Gastrocnemius medialis (tissue), 4 donors: ENCODE measurements at regions of chr12 and their contacts with region 1.

Region 1: DNA sequence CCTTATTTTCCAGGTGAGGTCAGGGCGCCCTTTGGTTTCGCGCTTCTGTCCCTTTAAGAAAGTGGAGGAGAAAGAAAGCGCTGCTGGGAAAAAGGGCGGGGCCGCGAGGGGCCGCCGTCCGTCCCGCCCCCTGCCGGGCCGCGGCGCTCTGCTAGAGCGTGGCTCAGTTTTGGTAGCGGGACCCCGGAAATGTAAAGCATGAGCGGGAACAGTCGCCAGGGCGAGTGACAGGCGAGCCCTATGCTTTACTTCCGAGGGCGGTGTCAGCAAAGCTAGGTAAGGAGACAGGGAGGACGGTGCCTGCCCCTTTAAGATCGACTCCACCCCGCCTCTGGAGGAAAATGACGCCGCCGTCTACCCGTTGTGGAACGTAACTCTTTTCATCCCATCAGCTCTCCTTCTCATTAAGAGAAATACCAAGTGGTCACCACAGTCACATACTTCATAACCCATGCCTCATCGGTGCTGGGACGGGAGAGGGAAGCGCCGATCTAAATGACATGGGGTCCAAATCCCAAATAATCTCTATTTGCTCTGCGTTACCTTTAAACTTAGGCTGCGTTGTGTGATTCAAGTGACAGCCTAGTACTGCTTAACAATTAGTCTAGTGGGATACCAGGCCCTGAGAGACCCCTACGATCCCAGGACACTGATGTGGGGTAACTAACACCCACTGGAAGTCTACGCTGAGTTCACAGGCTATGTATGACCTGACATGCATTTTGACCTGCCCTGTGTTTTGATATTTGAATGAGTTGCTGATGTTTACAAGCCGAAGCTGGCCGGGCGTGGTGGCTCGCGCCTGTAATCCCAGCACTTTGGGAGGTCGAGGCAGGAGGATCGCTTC is at the start of gene ETFBKMT:
- DNase-seq: peak; percentile 81 to 84
- ATAC-seq: peak; percentile 96 to 98
- H3K4me3 ChIP-seq: peak within 1 kb of the TSS; percentile 75 to 96 (median 90)
- H3K27ac ChIP-seq: peak within 1 kb of the TSS; percentile 89 to 98 (median 95)
- H3K4me1 ChIP-seq: peaks cover 4 to 12% of the 10 kb centered on the region in 2 donors
- H3K27me3 ChIP-seq: no peaks in the 10 kb centered on the region
- CTCF ChIP-seq: peak; percentile 24 to 76 (median 64)
- POLR2A ChIP-seq: peak; percentile 28 to 63
- total RNA-seq, gene ETFBKMT: 2.6 to 13.5 (median 5.0) TPM

Region 2: DNA sequence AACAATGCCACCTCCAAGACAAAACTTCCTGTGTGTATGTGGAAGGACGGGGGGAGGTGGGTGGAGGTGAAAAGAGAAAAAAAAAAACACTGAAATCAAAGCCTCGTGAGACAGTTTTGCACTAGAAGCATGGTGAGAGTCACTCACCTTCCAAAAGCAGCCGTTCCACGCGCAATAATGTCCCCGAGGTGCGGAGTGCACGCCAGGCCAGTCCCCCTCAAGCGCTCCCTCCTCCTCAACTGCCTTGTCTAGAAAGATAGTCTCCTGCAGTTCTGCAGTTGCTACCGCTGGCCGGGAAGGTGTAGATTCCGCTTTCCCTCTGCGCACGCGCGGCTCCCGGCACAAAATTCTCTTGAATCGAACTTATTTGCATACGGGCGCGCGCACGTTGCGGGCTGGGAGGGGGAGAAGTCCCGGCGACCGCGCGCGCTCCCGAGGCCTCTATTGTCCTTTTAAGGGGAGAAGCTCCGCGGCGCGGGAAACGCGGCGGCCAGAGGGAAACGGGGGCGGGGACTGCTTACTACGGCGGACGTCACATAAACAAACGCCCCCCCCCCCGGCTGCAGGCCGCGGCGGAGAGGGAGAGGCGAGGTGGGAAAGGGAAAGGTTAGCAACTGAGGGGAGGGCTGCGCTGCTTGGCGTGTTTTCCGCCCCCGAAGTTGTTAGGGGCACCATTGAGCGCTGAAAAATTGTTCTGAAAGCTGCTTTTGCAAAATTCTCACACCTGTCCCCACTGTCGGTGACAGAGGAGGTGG is 333.3 kb before region 1 on chr12 and contains the start of gene SINHCAF:
- in situ Hi-C with region 1: no loop called
- intact Hi-C with region 1: loop called (anchors 5 kb)
- DNase-seq: peak; percentile 98 to 99
- ATAC-seq: peak; percentile 82 to 87
- H3K4me3 ChIP-seq: peak within 1 kb of the TSS; percentile 70 to 85 (median 80)
- H3K27ac ChIP-seq: peak within 1 kb of the TSS; percentile 76 to 83 (median 82)
- H3K4me1 ChIP-seq: peaks cover 2 to 3% of the 10 kb centered on the region in 2 donors
- H3K27me3 ChIP-seq: peaks cover 0 to 27% (median 13%) of the 10 kb centered on the region in 3 donors
- CTCF ChIP-seq: no peak
- POLR2A ChIP-seq: peak; percentile 61 to 89
- total RNA-seq, gene SINHCAF: 1.5 to 8.6 (median 2.8) TPM

Region 3: DNA sequence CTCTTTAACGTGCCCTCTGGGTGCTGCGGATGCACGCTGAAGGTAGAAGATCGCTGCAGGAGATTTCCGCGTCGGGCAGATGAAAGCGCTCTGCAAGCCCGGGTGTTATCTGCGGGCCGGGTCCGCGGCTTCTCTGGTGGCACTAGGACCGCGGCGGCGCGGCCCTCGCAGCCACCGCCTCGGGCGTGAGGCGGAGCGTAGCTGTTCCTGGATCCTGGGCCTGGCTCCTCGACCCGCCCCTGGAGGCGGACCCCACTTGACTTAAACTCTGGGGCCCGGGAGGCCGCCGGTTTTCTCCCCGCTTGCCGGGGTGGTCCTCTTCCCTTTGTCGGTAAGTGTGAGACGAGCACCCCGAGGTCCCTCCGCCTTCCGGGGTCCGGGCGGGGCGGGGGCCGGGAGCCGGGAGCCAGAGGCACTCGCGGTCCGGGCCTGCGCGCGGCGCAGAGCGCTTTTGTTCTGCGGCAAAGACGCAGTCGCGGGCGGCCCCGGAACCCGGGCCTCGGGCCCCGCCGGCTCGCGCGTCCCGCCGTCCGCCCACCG is 299.9 kb after region 1 on chr12 and contains the start of gene RESF1:
- in situ Hi-C with region 1: loop called in 2 of 4 experiments (anchors 25 kb)
- intact Hi-C with region 1: loop called (anchors 1 kb)
- DNase-seq: peak; percentile 68 to 75
- ATAC-seq: peak; percentile 93 to 96
- H3K4me3 ChIP-seq: peak within 1 kb of the TSS; percentile 62 to 76 (median 68)
- H3K27ac ChIP-seq: peak within 1 kb of the TSS; percentile 81 to 91 (median 84)
- H3K4me1 ChIP-seq: peaks cover 21 to 34% of the 10 kb centered on the region in 2 donors
- H3K27me3 ChIP-seq: no peaks in the 10 kb centered on the region
- CTCF ChIP-seq: peak in 1 of 5 experiments; percentile 19
- POLR2A ChIP-seq: peak; percentile 66 to 69
- total RNA-seq, gene RESF1: 16.0 to 31.7 (median 17.7) TPM

Region 4: DNA sequence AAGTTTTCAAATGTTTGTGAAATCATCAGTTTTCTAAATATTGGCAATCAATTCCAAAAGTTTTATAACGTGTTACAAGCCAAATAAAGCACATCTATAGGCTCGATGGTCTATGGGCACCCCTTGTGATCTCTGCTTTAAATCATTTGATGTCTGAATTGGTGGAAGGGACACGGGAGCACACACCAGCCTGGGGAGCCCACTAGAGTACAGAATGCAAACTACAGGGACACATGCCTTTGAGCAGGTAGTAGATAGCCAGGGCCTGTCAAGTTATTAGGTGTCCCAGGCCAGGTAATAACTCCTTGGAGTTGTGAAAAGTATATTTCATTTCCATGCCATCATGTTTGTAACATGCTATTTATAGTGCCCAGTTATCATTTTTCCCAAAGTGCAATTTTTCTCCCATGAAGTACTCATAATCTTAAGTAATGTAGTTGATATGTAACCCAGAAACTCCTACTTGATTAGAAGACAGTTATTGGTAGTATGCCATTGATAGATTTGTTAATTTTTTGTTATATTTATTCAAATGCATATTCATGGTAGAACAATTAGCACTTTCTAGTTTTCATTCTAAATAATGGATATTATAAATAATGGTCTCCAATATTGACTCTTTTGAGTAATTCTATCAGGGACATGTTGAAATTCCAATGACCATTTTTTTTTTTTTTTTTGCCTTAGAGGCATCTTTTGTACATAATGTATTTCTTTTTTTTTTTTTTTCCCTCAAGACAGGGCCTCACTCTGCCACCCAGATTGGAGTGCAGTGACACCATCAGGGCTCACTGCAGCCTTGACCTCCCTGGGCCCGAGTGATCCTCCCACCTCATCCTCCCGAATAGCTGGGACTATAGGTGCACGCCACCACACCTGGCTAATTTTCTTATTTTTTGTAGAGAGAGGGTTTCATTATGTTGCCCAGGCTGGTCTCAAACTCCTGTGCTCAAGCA is 643.2 kb after region 1 on chr12:
- in situ Hi-C with region 1: loop called in 3 of 4 experiments (anchors 10 to 25 kb)
- intact Hi-C with region 1: no loop called
- DNase-seq: no peak
- ATAC-seq: no peak
- H3K4me3 ChIP-seq: no peak overlapping the region
- H3K27ac ChIP-seq: no peak overlapping the region
- H3K4me1 ChIP-seq: peaks cover 0 to 3% of the 10 kb centered on the region in 2 donors
- H3K27me3 ChIP-seq: no peaks in the 10 kb centered on the region
- CTCF ChIP-seq: no peak
- POLR2A ChIP-seq: no peak

Region 5: GRCh38 chr12:32679091-32679919 is 1020.0 kb after region 1 on chr12 and contains the start of gene DNM1L:
- in situ Hi-C with region 1: loop called in 1 of 4 experiments (anchors 25 kb)
- intact Hi-C with region 1: no loop called
- DNase-seq: peak; percentile 88 to 91
- ATAC-seq: peak; percentile 96 to 97
- H3K4me3 ChIP-seq: peak within 1 kb of the TSS; percentile 77 to 93 (median 88)
- H3K27ac ChIP-seq: peak within 1 kb of the TSS; percentile 87 to 91 (median 90)
- H3K4me1 ChIP-seq: peaks cover 13 to 19% of the 10 kb centered on the region in 2 donors
- H3K27me3 ChIP-seq: no peaks in the 10 kb centered on the region
- CTCF ChIP-seq: peak in 1 of 5 experiments; percentile 9
- POLR2A ChIP-seq: peak; percentile 70 to 89
- total RNA-seq, gene DNM1L: 39.3 to 68.3 (median 43.8) TPM